ENCODE measurements at regions of chr2 and their contacts with region 1.

Region 1: GRCh38 chr2:201978986-201979385 is 54.7 kb upstream of the FZD7 start:
- DNase-seq: no peak
- H3K4me3 ChIP-seq: no peak overlapping the region
- H3K27ac ChIP-seq: no peak overlapping the region
- H3K4me1 ChIP-seq: no peaks in the 10 kb centered on the region
- H3K27me3 ChIP-seq: no peaks in the 10 kb centered on the region
- CTCF ChIP-seq: no peak

Region 2: GRCh38 chr2:201890457-201890856 is 88.5 kb before region 1 on chr2:
- CTCF ChIA-PET with region 1: no interaction called
- POLR2A ChIA-PET with region 1: no interaction called
- intact Hi-C with region 1: loop called (anchors 5 kb)
- DNase-seq: peak in 1 of 2 experiments; percentile 87
- H3K4me3 ChIP-seq: no peak overlapping the region
- H3K27ac ChIP-seq: peak overlapping the region; percentile 56
- H3K4me1 ChIP-seq: peaks cover 32% of the 10 kb centered on the region
- H3K27me3 ChIP-seq: no peaks in the 10 kb centered on the region
- CTCF ChIP-seq: no peak

Region 3: GRCh38 chr2:202001826-202002225 is 22.8 kb after region 1 on chr2:
- CTCF ChIA-PET with region 1: no interaction called
- POLR2A ChIA-PET with region 1: no interaction called
- intact Hi-C with region 1: loop called (anchors 1 kb)
- DNase-seq: no peak
- H3K4me3 ChIP-seq: no peak overlapping the region
- H3K27ac ChIP-seq: no peak overlapping the region
- H3K4me1 ChIP-seq: no peaks in the 10 kb centered on the region
- H3K27me3 ChIP-seq: no peaks in the 10 kb centered on the region
- CTCF ChIP-seq: no peak

Region 4: GRCh38 chr2:202084265-202084664 is 105.3 kb after region 1 on chr2:
- CTCF ChIA-PET with region 1: no interaction called
- POLR2A ChIA-PET with region 1: no interaction called
- intact Hi-C with region 1: no loop called
- DNase-seq: no peak
- H3K4me3 ChIP-seq: no peak overlapping the region
- H3K27ac ChIP-seq: no peak overlapping the region
- H3K4me1 ChIP-seq: no peaks in the 10 kb centered on the region
- H3K27me3 ChIP-seq: no peaks in the 10 kb centered on the region
- CTCF ChIP-seq: no peak

Region 5: DNA sequence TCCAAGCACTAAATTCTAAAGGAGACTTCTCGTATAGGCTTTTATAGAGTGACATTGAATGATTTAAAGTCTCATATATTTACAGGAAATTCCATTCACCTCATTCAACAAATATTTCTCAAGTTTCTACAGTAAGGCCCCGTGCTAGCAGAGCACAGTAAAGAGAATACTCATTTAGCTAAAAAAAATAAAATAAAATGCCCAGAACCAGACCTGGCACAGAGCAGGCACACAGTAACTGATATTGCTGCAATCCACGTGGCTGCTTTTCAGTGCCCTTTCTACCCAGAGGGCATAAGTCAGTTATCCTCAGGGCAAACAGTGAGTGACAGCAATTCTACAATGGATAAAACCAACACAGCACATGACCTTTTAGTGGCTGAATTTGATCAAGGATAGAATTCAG is 206.8 kb after region 1 on chr2:
- CTCF ChIA-PET with region 1: interaction called, 10 read pairs
- POLR2A ChIA-PET with region 1: no interaction called
- intact Hi-C with region 1: no loop called
- DNase-seq: peak; percentile 44 to 72
- H3K4me3 ChIP-seq: no peak overlapping the region
- H3K27ac ChIP-seq: peak overlapping the region; percentile 23
- H3K4me1 ChIP-seq: peaks cover 11% of the 10 kb centered on the region; the same call in 1 of the 2 replicates
- H3K27me3 ChIP-seq: no peaks in the 10 kb centered on the region
- CTCF ChIP-seq: no peak